OCI-LY7 (cell line): ENCODE measurements at regions of chr13 and their contacts with region 1.

Region 1: GRCh38 chr13:45047394-45048310 is 58.3 kb downstream of the GPALPP1 start:
- DNase-seq: peak; percentile 77
- H3K4me3 ChIP-seq: no peak overlapping the region
- H3K27ac ChIP-seq: no peak overlapping the region
- H3K4me1 ChIP-seq: peaks cover 10% of the 10 kb centered on the region
- CTCF ChIP-seq: peak; percentile 95

Region 2: DNA sequence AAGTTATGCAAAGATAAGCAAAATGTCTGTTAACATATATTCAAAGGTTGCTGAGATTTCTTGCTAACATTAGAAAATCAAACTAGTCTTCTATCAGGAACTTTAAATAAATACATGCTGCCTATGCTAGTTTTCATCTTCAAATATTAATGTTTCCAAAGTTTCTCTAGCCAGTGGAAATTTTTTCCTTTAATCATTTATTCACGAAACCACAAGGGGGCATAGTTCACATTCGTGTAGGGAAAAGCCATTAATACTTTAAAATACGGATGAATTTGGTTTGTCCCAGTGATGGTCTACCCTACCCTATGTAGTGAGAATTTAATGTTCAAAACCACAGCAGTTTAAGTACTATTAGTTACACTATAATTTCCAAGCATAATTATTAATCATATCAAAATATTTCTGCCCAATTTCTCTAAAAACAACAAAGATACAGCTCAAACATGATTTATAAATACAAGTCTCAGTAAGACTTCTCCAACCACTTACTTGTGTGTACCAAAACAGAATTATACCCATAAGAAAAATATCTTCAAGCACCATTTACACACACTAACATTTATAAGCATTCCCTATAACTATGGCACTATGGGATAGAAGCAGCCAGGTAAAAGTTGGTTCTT is 74.6 kb before region 1 on chr13:
- CTCF ChIA-PET with region 1: no interaction called
- POLR2A ChIA-PET with region 1: no interaction called
- intact Hi-C with region 1: no loop called
- DNase-seq: peak; percentile 38
- H3K4me3 ChIP-seq: no peak overlapping the region
- H3K27ac ChIP-seq: no peak overlapping the region
- H3K4me1 ChIP-seq: no peaks in the 10 kb centered on the region
- CTCF ChIP-seq: peak; percentile 76

Region 3: DNA sequence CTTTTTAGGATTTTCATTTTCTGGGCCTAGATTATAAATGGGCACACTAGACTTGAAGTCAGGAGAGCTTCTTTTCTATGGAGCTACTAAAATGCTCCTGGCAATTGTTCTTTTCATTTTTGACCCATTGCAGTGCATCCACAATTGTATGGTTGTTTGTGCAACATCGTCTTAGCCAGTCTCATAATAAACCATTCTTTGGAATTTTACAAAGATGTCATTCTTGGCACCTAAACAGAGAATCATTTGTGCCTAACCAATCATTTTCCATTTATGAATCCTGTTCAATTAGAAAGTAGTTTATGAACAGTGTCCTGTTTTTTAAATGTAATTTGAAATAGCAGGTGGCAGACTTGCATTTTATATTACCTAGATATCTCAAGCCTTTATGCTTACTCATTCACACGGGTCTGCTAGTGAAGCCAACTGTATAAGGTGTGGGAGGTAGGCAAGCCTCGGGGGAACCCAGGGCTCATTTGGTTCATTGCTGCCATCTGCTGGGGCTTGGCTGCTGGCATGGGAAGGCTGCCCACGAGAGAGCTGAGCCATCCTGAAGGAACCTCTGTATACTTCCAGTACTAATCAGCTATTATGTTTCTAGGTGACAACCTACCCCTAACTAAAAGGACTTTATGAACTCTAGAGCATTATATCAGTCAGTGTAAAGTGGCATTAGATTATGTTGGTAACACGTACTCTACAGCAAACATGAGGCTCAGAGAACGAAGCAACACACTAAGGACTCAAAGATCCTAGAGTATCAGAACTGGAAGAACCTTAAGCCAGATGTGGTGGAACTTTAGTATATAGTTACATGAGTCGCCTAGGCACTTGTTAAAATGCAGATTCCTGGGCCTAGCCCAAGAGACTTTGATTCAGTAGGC is 233.3 kb after region 1 on chr13:
- CTCF ChIA-PET with region 1: interaction called, 4 read pairs
- POLR2A ChIA-PET with region 1: no interaction called
- intact Hi-C with region 1: loop called (anchors 1 kb)
- DNase-seq: peak; percentile 48
- H3K4me3 ChIP-seq: no peak overlapping the region
- H3K27ac ChIP-seq: no peak overlapping the region
- H3K4me1 ChIP-seq: peaks cover 5% of the 10 kb centered on the region
- CTCF ChIP-seq: peak; percentile 80

Region 4: GRCh38 chr13:45310341-45311125 is 262.9 kb after region 1 on chr13:
- CTCF ChIA-PET with region 1: interaction called, 3 read pairs
- POLR2A ChIA-PET with region 1: interaction called, 7 read pairs
- intact Hi-C with region 1: loop called (anchors 1 kb)
- DNase-seq: no peak
- H3K4me3 ChIP-seq: peak overlapping the region; percentile 51
- H3K27ac ChIP-seq: no peak overlapping the region
- H3K4me1 ChIP-seq: peaks cover 10% of the 10 kb centered on the region
- CTCF ChIP-seq: no peak

Region 5: GRCh38 chr13:45393941-45394570 is 346.4 kb after region 1 on chr13:
- CTCF ChIA-PET with region 1: no interaction called
- POLR2A ChIA-PET with region 1: no interaction called
- intact Hi-C with region 1: loop called (anchors 5 kb)
- DNase-seq: peak; percentile 54
- H3K4me3 ChIP-seq: no peak overlapping the region
- H3K27ac ChIP-seq: no peak overlapping the region
- H3K4me1 ChIP-seq: no peaks in the 10 kb centered on the region
- CTCF ChIP-seq: peak; percentile 75

Region 6: GRCh38 chr13:45473627-45474026 is 426.0 kb after region 1 on chr13:
- CTCF ChIA-PET with region 1: no interaction called
- POLR2A ChIA-PET with region 1: no interaction called
- intact Hi-C with region 1: no loop called
- DNase-seq: peak; percentile 28
- H3K4me3 ChIP-seq: no peak overlapping the region
- H3K27ac ChIP-seq: no peak overlapping the region
- H3K4me1 ChIP-seq: peaks cover 10% of the 10 kb centered on the region
- CTCF ChIP-seq: peak; percentile 56

Region 7: GRCh38 chr13:45584816-45585215 is 537.2 kb after region 1 on chr13:
- CTCF ChIA-PET with region 1: no interaction called
- POLR2A ChIA-PET with region 1: no interaction called
- intact Hi-C with region 1: no loop called
- DNase-seq: no peak
- H3K4me3 ChIP-seq: no peak overlapping the region
- H3K27ac ChIP-seq: no peak overlapping the region
- H3K4me1 ChIP-seq: no peaks in the 10 kb centered on the region
- CTCF ChIP-seq: 0 out of 2 replicates have a peak, but pooled peaks have one; percentile 23